Sigmoid colon (tissue), 7 donors: ENCODE measurements at regions of chr5 and their contacts with region 1.

Region 1: DNA sequence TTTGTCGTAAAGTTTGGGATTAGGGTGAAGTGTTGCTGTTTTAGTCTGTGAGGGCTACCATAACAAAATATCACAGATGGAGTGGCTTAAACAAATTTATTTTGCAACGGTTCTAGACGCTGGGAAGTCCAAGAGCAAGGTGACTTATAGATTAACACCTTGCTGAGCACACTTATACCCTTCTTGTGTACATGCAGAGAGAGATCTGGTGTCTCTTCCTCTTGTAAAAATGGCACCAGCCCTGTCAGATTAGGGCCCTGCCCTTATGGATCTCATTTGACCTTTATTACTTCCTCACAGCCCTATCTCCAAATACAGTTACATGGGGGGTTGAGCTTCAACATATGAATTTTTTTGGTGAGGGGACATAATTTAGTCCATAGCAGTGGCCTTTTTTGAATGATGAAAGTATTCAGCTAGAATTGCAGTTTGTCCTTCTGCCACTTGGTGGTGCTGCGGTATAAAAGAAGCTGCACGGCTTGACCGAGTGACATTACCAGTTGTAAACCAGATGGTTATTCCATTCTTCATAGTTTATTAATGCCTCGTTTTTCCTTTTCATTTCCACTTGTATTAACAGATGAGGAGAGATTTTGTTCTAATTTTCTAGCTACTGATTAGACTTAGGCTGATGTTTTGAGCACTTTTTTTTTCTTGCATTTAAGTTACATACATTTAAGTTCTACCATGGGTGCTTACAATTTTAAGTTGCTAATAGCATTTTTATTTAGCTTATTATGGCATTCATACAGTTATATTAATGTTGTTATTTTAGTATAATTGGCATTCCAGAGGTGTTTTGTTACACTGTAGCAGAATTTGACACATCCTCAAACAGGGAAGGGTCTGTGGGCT is 19.4 kb downstream of the DCP2 start:
- DNase-seq: peak; percentile 81
- H3K4me3 ChIP-seq: no peak overlapping the region
- H3K27ac ChIP-seq: no peak overlapping the region
- H3K4me1 ChIP-seq: peaks cover 0 to 4% (median 0%) of the 10 kb centered on the region in 4 donors
- H3K27me3 ChIP-seq: no peaks in the 10 kb centered on the region
- CTCF ChIP-seq: peak; percentile 59 to 92 (median 77)
- EP300 ChIP-seq: no peak
- POLR2A ChIP-seq: no peak

Region 2: DNA sequence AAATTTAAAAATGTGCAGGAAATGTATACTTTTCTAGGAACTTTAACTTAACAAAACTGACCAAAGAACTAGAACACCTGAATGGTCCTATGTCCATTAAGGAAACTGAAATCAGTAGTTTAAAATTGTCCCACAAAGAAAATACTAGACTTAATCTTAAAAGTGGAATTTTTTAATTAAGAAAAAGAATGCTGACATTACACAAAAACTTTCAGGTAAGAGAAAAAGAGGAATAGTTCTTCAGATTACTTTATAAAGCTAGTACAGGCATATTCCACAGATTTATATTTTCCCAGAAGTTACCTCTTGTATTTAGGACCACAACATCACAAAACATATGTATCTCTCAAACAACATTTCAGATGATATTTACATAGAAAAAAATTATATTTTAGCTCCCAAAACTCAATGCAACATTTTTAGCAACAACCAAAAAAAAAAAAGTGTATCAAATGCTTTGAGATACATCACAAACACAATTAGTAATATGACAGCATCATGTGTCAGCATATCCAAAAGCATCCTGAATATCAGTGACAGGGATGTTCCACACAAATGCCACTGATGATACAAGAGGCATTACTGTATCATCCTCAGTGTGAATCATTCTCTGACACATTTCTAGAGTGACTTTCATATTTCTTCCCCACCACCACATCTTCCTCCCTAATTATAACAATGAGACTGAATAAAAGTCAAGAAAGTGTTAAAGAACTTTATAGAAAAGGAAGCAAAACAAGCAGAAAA is 840.9 kb before region 1 on chr5:
- intact Hi-C with region 1: no loop called
- DNase-seq: no peak
- H3K4me3 ChIP-seq: no peak overlapping the region
- H3K27ac ChIP-seq: no peak overlapping the region
- H3K4me1 ChIP-seq: peaks cover 0 to 2% (median under 1%) of the 10 kb centered on the region in 4 donors
- H3K27me3 ChIP-seq: no peaks in the 10 kb centered on the region
- CTCF ChIP-seq: no peak
- EP300 ChIP-seq: no peak
- POLR2A ChIP-seq: no peak

Region 3: DNA sequence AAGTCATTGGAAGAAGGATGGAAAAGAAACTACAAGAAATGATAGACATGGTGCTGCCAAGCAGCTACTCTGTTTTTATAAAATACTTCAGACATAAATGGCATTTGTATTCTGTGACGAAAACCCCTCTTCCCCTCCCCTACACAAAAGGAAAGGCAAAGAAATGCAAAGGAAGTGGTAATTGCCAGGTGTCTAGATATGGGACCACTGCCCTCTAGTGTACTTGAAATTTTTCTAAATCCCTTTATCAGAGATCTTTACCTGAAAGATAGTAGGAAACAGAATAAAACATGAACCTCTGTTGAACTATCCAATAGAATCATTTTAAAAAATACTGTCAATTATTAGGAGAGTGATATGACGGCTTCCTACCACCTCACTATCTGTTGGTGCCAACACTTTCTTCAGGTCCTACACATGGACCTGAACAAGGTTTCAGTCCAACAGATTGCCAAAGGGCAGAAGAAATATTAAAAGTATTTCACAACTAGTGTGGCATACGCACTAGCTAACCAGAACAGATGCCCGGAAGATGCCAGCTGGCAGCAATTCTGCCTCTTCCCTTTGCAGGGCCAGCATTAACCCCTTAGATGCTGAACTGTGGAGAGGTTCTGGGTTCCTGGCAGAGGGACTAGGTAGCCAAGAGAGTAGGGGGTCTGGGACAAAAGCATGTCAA is 334.7 kb after region 1 on chr5:
- intact Hi-C with region 1: loop called (anchors 10 kb)
- DNase-seq: peak; percentile 74
- H3K4me3 ChIP-seq: no peak overlapping the region
- H3K27ac ChIP-seq: no peak overlapping the region
- H3K4me1 ChIP-seq: peaks cover 0 to 11% (median 9%) of the 10 kb centered on the region in 4 donors
- H3K27me3 ChIP-seq: no peaks in the 10 kb centered on the region
- CTCF ChIP-seq: peak in 1 of 4 experiments; percentile 28
- EP300 ChIP-seq: no peak
- POLR2A ChIP-seq: no peak

Region 4: GRCh38 chr5:113513384-113514288 is 517.6 kb after region 1 on chr5 and contains the start of gene YTHDC2:
- intact Hi-C with region 1: loop called (anchors 5 kb)
- DNase-seq: peak; percentile 92
- H3K4me3 ChIP-seq: peak within 1 kb of the TSS; percentile 74 to 90 (median 81)
- H3K27ac ChIP-seq: peak within 1 kb of the TSS; percentile 92 to 96 (median 94)
- H3K4me1 ChIP-seq: peaks cover 0 to 23% (median 18%) of the 10 kb centered on the region in 4 donors
- H3K27me3 ChIP-seq: no peaks in the 10 kb centered on the region
- CTCF ChIP-seq: peak in 1 of 4 experiments; percentile 4
- EP300 ChIP-seq: no peak
- POLR2A ChIP-seq: peak; percentile 38 to 44
- total RNA-seq, gene YTHDC2: 15.6 to 21.9 (median 21.7) TPM

Region 5: GRCh38 chr5:113606298-113607134 is 610.5 kb after region 1 on chr5:
- intact Hi-C with region 1: loop called (anchors 5 kb)
- DNase-seq: no peak
- H3K4me3 ChIP-seq: no peak overlapping the region
- H3K27ac ChIP-seq: no peak overlapping the region
- H3K4me1 ChIP-seq: no peaks in the 10 kb centered on the region
- H3K27me3 ChIP-seq: no peaks in the 10 kb centered on the region
- CTCF ChIP-seq: peak in 3 of 4 experiments; percentile 52 to 59 (median 58)
- EP300 ChIP-seq: no peak
- POLR2A ChIP-seq: no peak